ENCODE measurements at regions of chr4 and their contacts with region 1.

Region 1: DNA sequence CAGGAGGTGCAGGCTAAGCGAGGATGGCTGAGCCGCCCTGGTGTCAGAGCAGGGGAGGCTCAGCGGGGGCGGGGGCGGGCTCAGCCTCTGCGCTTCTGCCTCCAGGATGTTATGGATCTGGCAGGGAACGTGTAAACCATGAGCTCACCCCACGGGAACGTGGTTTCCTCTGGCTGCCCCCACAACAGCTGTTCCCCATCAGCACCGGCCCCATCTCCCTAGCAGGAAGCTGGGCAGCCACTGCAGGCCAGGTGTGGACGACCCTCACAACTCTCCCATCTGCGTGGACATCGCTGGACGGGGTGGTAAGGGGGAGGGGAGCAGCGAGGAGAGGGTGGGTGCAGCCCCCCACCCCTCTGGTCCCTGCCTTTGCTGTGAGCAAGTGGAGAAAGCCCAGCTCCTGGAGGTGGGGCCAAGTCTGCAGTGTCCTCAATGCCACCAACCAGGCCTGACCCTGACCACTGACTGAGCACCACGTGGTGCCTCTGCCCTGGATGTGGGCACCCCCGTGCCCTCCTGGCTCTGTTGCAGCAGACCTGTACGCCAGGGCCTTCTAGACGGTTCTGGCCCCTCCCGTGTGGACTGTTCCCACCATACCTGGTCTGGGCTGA is 28.1 kb upstream of the SPON2 start:
- DNase-seq: peak; percentile 40
- H3K4me3 Mint-ChIP-seq: peak overlapping the region; percentile 67
- H3K27ac Mint-ChIP-seq: peak overlapping the region; percentile 97
- H3K4me1 Mint-ChIP-seq: peaks cover 33% of the 10 kb centered on the region
- H3K27me3 Mint-ChIP-seq: no peaks in the 10 kb centered on the region

Region 2: GRCh38 chr4:1183985-1184773 is 16.4 kb before region 1 on chr4:
- CTCF ChIA-PET with region 1: no interaction called
- POLR2A ChIA-PET with region 1: interaction called, 8 read pairs
- intact Hi-C with region 1: loop called (anchors 1 kb)
- DNase-seq: no peak
- H3K4me3 Mint-ChIP-seq: no peak overlapping the region
- H3K27ac Mint-ChIP-seq: peak overlapping the region; percentile 49
- H3K4me1 Mint-ChIP-seq: peaks cover 13% of the 10 kb centered on the region
- H3K27me3 Mint-ChIP-seq: peaks cover 9% of the 10 kb centered on the region

Region 3: GRCh38 chr4:1216869-1217294 is 16.4 kb after region 1 on chr4:
- CTCF ChIA-PET with region 1: no interaction called
- POLR2A ChIA-PET with region 1: interaction called, 3 read pairs
- intact Hi-C with region 1: loop called (anchors 2 kb)
- DNase-seq: peak; percentile 82
- H3K4me3 Mint-ChIP-seq: peak overlapping the region; percentile 46
- H3K27ac Mint-ChIP-seq: peak overlapping the region; percentile 79
- H3K4me1 Mint-ChIP-seq: peaks cover 35% of the 10 kb centered on the region
- H3K27me3 Mint-ChIP-seq: no peaks in the 10 kb centered on the region

Region 4: DNA sequence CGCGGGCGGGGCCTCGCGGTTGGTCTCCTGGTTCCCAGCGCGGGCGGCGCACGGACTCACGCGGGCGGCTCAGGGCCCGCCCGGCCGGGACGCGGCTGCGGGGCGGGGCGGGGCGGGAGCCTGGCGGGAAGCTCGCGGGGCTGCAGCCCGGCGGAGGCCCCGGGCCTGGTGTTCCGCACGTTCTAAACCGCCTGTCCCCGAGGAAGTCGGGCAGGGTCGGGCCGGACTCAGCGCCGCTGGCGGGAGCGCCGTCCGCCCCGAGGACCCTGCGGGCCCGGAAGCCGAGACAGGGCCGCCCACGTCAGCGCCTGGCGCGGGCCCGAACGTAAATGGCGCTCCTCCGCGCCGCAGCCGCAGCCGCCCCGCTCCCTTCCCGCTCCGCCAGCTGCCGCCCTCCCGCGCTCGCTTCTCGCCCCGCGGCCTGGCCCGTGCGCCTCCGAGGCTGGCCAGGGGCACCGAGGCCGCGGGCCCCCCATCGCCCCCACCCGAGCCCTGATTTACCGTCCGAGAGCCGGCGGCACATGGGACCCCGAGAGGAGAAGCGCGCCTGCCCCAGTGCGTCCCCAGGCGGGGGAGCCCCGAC is 48.7 kb after region 1 on chr4:
- CTCF ChIA-PET with region 1: no interaction called
- POLR2A ChIA-PET with region 1: interaction called, 6 read pairs
- intact Hi-C with region 1: loop called (anchors 1 kb)
- DNase-seq: peak; percentile 85
- H3K4me3 Mint-ChIP-seq: peak overlapping the region; percentile 85
- H3K27ac Mint-ChIP-seq: peak overlapping the region; percentile 96
- H3K4me1 Mint-ChIP-seq: peaks cover 69% of the 10 kb centered on the region
- H3K27me3 Mint-ChIP-seq: no peaks in the 10 kb centered on the region

Measured in activated CD4-positive, alpha-beta memory T cell treated with anti-CD3 and anti-CD28 coated beads for 36 hours (primary cell).